ENCODE measurements at regions of chr2 and their contacts with region 1.

Region 1: DNA sequence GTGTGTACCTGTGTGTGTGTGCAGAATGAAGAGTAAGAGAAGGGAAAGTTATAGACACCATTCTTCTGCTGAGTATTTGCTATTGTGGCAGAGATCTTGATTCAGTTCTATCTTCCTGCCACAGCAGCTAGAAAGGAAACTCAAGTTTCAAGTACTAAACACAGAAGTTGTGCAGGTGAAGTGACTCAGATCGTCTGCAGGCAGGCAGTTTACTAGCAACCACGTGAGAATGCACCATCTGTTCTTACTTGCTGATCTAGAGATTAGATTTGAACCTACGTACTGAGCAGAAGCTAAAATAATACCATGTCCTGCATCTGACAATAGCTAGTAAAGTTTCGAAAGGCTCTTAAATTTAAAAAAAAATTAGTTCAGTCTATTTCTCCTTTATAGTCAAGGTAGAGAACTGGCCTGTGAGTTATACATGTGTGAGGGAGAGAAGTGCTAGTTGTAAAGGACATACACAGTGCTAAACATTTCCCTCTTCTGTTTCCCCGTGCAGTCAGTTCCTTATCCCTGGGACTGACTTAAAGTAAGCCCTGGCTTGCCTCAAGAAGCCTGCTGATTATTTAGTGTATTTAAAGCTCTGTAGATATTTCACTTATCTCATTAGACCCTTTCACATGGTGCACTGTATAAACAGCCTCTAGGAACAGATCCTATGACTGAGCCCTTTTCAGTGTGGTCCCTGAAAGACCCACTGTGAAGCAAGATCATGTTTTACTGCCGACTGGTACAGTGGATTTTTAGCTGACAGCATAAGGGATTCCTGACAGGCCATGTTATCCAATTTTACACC is 45.0 kb downstream of the SLC38A11 start:
- DNase-seq: peak in 3 of 9 donors; percentile 2 to 21 (median 11)
- ATAC-seq: peak; percentile 71
- H3K4me3 ChIP-seq: no peak overlapping the region
- H3K4me3 Mint-ChIP-seq: peak overlapping the region in 1 of 10 donors; percentile 3
- H3K27ac ChIP-seq: no peak overlapping the region
- H3K27ac Mint-ChIP-seq: no peak overlapping the region
- H3K4me1 ChIP-seq: no peaks in the 10 kb centered on the region
- H3K4me1 Mint-ChIP-seq: peaks cover 0 to 15% (median 0%) of the 10 kb centered on the region in 7 donors
- H3K27me3 ChIP-seq: no peaks in the 10 kb centered on the region
- H3K27me3 Mint-ChIP-seq: peaks cover 0 to 17% (median 0%) of the 10 kb centered on the region in 5 donors

Region 2: GRCh38 chr2:164737612-164738081 is 172.7 kb before region 1 on chr2:
- CTCF ChIA-PET with region 1: no interaction called
- POLR2A ChIA-PET with region 1: no interaction called
- intact Hi-C with region 1: loop called in 1 of 2 experiments (anchors 5 kb)
- DNase-seq: peak in 2 of 9 donors; percentile 2 to 21
- ATAC-seq: peak; percentile 60
- H3K4me3 ChIP-seq: no peak overlapping the region
- H3K4me3 Mint-ChIP-seq: no peak overlapping the region
- H3K27ac ChIP-seq: no peak overlapping the region
- H3K27ac Mint-ChIP-seq: no peak overlapping the region
- H3K4me1 ChIP-seq: no peaks in the 10 kb centered on the region
- H3K4me1 Mint-ChIP-seq: no peaks in the 10 kb centered on the region
- H3K27me3 ChIP-seq: no peaks in the 10 kb centered on the region
- H3K27me3 Mint-ChIP-seq: peaks cover 0 to 9% (median 4%) of the 10 kb centered on the region in 5 donors

Region 3: DNA sequence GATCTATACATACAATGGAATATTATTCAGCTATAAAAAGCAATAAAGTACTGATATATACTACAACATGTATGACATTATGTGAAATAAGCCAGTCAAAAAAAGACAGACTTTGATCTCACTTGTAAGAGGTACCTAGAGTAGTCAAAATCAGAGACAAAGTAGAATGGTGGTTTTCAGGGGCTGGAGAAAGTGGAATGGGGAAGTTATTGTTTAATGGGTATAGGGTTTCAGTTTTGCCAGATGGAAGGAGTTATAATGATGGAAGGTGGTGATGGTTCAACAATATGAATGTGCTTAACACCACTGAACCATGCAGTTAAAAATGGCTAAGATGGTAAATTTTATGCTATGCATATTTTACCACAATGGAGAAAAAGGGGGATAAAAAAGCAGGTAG is 75.0 kb before region 1 on chr2:
- CTCF ChIA-PET with region 1: no interaction called
- POLR2A ChIA-PET with region 1: no interaction called
- intact Hi-C with region 1: no loop called
- DNase-seq: no peak
- ATAC-seq: no peak
- H3K4me3 ChIP-seq: no peak overlapping the region
- H3K4me3 Mint-ChIP-seq: no peak overlapping the region
- H3K27ac ChIP-seq: no peak overlapping the region
- H3K27ac Mint-ChIP-seq: no peak overlapping the region
- H3K4me1 ChIP-seq: no peaks in the 10 kb centered on the region
- H3K4me1 Mint-ChIP-seq: peaks cover 0 to 5% (median 3%) of the 10 kb centered on the region in 7 donors
- H3K27me3 ChIP-seq: no peaks in the 10 kb centered on the region
- H3K27me3 Mint-ChIP-seq: peaks cover 13 to 42% (median 34%) of the 10 kb centered on the region in 5 donors

Region 4: GRCh38 chr2:164896634-164897355 is 13.5 kb before region 1 on chr2:
- CTCF ChIA-PET with region 1: no interaction called
- POLR2A ChIA-PET with region 1: no interaction called
- intact Hi-C with region 1: loop called in 1 of 2 experiments (anchors 2 kb)
- DNase-seq: no peak
- ATAC-seq: peak; percentile 66
- H3K4me3 ChIP-seq: no peak overlapping the region
- H3K4me3 Mint-ChIP-seq: no peak overlapping the region
- H3K27ac ChIP-seq: no peak overlapping the region
- H3K27ac Mint-ChIP-seq: no peak overlapping the region
- H3K4me1 ChIP-seq: no peaks in the 10 kb centered on the region
- H3K4me1 Mint-ChIP-seq: peaks cover 0 to 9% (median 0%) of the 10 kb centered on the region in 7 donors
- H3K27me3 ChIP-seq: no peaks in the 10 kb centered on the region
- H3K27me3 Mint-ChIP-seq: peaks cover 0 to 14% (median 0%) of the 10 kb centered on the region in 5 donors

Region 5: GRCh38 chr2:164981217-164981990 is 71.1 kb after region 1 on chr2:
- CTCF ChIA-PET with region 1: no interaction called
- POLR2A ChIA-PET with region 1: no interaction called
- intact Hi-C with region 1: no loop called
- DNase-seq: no peak
- ATAC-seq: no peak
- H3K4me3 ChIP-seq: no peak overlapping the region
- H3K4me3 Mint-ChIP-seq: no peak overlapping the region
- H3K27ac ChIP-seq: no peak overlapping the region
- H3K27ac Mint-ChIP-seq: no peak overlapping the region
- H3K4me1 ChIP-seq: no peaks in the 10 kb centered on the region
- H3K4me1 Mint-ChIP-seq: peaks cover 0 to 4% (median 0%) of the 10 kb centered on the region in 7 donors
- H3K27me3 ChIP-seq: no peaks in the 10 kb centered on the region
- H3K27me3 Mint-ChIP-seq: peaks cover 0 to 7% (median 0%) of the 10 kb centered on the region in 5 donors